ENCODE measurements at regions of chr19 and their contacts with region 1.

Region 1: GRCh38 chr19:28324275-28325060 is 888.5 kb downstream of the UQCRFS1 start:
- DNase-seq: no peak
- H3K4me3 Mint-ChIP-seq: no peak overlapping the region
- H3K27ac Mint-ChIP-seq: no peak overlapping the region
- H3K4me1 Mint-ChIP-seq: peaks cover 12% of the 10 kb centered on the region
- H3K27me3 Mint-ChIP-seq: no peaks in the 10 kb centered on the region

Region 2: GRCh38 chr19:27966390-27966816 is 358.1 kb before region 1 on chr19:
- intact Hi-C with region 1: loop called (anchors 1 kb)
- DNase-seq: no peak
- H3K4me3 Mint-ChIP-seq: no peak overlapping the region
- H3K27ac Mint-ChIP-seq: no peak overlapping the region
- H3K4me1 Mint-ChIP-seq: no peaks in the 10 kb centered on the region
- H3K27me3 Mint-ChIP-seq: no peaks in the 10 kb centered on the region

Region 3: GRCh38 chr19:28051047-28051446 is 273.4 kb before region 1 on chr19:
- intact Hi-C with region 1: no loop called
- DNase-seq: no peak
- H3K4me3 Mint-ChIP-seq: no peak overlapping the region
- H3K27ac Mint-ChIP-seq: no peak overlapping the region
- H3K4me1 Mint-ChIP-seq: no peaks in the 10 kb centered on the region
- H3K27me3 Mint-ChIP-seq: no peaks in the 10 kb centered on the region

Region 4: DNA sequence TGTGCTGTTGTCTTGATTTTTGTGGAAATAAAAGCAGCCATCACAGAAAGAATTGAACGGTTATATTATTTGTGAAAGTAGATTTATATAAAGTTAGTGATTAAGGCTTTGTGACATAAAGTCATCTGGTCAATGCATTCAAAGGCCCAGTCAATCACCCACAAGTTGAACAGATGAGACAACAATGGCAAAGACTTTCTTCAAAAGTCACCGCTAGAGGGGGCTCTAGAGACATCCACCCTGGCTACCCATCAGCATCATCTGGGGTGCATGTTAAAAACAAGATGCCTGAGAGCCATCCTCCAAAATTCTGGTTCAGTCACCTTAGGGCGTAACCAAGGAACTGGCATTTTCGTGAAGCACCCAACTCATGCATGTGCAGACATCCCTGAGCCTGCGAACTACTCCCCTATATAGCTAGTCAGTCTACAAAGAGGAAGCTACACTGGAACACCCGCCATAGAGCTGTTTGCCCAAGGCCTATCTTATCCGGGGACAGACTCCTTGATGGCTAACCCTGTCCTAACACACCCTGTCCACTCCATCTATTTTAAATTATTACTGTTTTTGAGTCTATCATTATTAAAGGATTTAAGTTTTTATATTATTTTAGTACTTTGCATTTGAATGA is 82.1 kb before region 1 on chr19:
- intact Hi-C with region 1: loop called (anchors 1 kb)
- DNase-seq: peak; percentile 84
- H3K4me3 Mint-ChIP-seq: no peak overlapping the region
- H3K27ac Mint-ChIP-seq: no peak overlapping the region
- H3K4me1 Mint-ChIP-seq: no peaks in the 10 kb centered on the region
- H3K27me3 Mint-ChIP-seq: no peaks in the 10 kb centered on the region

Measured in activated CD4-positive, alpha-beta T cell treated with anti-CD3 and anti-CD28 coated beads, Interleukin-2, amount 10 ng/mL, durations not matched to agents 24 days and 14 days (primary cell).